ENCODE measurements at regions of chr7 and their contacts with region 1.

Region 1: DNA sequence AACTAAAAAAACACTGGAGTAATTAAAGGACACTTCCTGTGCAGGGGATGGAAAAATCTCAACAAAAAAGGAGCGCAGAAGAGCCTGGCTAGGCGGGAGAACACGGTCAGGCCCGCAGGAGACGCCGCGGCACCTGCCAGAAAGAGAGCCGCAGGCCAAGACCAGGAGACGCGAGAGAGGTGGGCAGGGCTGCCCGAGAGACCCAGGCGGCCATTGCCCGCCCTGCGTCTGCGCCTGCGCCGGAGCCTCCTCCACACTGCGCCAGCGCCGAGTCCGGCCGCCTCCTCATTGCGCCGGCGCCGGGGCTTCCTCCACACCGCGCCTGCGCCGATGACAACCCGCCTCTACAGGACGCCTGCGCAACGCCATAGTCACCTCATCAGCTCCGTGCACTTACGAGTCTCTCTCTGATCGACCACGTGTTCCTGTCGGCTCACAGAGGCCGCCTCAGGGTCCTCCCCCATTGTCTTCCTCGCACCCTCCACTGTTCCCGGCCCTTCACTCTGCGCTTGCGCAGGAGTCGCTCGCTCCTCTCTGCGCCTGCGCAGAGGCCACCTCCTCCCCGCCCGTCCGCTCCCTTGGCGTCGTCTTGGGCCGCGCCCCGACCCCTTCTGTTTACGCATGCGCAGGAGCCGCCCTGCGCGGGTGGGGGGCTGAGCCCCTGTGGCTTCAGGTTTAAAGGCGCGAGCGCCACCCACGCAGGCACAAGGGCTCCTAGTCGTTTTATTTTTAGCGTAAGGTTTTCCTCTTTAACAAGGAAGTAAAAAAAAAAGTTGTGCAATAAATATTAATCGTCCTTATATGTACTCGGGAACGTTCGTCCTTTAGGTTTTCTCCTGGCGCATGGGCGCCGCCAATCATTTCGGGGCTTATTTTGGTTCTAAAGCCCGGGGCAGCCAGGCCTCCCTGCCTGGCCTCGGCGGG is 43.2 kb upstream of the FAM20C start:
- DNase-seq: peak; percentile 98
- ATAC-seq: peak; percentile 99
- H3K4me3 Mint-ChIP-seq: peak overlapping the region; percentile 87
- H3K27ac Mint-ChIP-seq: peak overlapping the region; percentile 97
- H3K4me1 Mint-ChIP-seq: peaks cover 13% of the 10 kb centered on the region
- H3K27me3 Mint-ChIP-seq: no peaks in the 10 kb centered on the region

Region 2: DNA sequence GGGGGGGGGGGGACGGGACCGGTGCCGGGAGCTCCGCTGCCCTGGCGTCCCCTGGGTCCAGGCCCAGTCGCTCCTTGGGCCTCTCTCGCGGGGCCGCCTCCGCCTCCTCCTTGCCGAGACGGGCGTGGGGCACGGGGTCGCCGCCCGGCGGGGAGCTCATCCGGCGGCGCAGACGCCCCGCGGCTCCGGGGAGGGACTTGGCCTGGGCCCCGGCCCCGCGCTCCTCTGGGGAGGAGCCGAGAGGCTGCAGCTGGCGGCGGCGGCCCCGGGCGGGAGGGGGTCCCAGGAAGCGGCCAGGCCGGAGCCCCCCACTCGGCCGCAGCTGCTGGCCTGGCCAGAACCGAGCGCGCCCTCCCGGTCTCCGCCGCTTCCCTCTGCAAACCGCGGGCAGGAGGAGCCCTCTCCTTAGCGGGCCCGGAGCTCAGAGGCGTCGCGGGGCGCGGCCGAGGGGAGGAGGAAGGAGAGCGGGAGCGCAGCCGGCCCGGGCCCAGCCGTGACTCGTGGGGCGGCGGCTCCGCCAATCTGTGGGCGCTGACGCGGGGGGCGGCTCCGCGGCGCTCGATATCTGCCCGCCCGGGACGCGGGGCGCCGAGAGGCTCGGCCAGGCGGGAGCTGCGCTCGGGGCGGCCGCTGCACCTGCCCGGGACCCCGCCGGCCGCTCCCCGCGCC is 42.9 kb after region 1 on chr7 and contains the start of gene FAM20C:
- CTCF ChIA-PET with region 1: no interaction called
- POLR2A ChIA-PET with region 1: no interaction called
- intact Hi-C with region 1: loop called in 1 of 2 experiments (anchors 1 kb)
- DNase-seq: peak; percentile 59
- ATAC-seq: peak; percentile 84
- H3K4me3 Mint-ChIP-seq: peak within 1 kb of the TSS; percentile 59
- H3K27ac Mint-ChIP-seq: no peak within 1 kb of the TSS
- H3K4me1 Mint-ChIP-seq: peaks cover 3% of the 10 kb centered on the region
- H3K27me3 Mint-ChIP-seq: peaks cover 36% of the 10 kb centered on the region
- total RNA-seq, gene FAM20C: 0.21 to 0.59 TPM

Region 3: DNA sequence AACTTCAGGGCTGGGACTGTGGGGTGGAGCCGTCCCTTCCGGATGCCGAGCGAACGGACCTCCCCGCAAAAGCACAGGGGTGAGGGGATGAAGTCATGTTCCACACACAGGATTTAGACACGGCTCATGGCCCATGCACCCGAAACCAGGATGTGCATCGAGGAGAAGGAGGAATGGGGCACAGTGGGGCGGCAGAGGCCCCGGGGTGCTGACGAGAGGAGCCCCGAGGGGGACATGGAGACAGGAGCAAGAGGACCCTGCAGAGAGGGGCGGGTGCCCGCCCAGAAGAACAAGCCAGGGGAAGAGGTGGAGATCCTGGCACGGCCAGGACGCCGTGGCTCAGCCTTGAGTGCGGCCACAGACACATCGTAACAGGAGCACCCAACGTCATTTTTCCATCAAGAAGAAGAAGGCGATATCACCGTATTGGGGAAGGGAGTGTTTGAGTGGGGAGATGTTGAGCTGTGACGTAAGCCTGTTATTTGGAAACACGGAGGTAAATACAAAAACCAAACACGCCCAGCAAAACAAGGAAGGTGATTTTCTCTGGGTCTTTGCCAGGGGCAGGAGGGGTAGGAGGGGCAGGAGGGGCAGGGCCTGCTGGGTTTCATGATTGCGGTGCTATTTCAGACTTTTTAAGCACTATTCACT is 115.5 kb after region 1 on chr7:
- CTCF ChIA-PET with region 1: no interaction called
- POLR2A ChIA-PET with region 1: no interaction called
- intact Hi-C with region 1: loop called in 1 of 2 experiments (anchors 2 kb)
- DNase-seq: no peak
- ATAC-seq: no peak
- H3K4me3 Mint-ChIP-seq: no peak overlapping the region
- H3K27ac Mint-ChIP-seq: no peak overlapping the region
- H3K4me1 Mint-ChIP-seq: no peaks in the 10 kb centered on the region
- H3K27me3 Mint-ChIP-seq: no peaks in the 10 kb centered on the region

Region 4: GRCh38 chr7:322111-322671 is 173.0 kb after region 1 on chr7:
- CTCF ChIA-PET with region 1: no interaction called
- POLR2A ChIA-PET with region 1: no interaction called
- intact Hi-C with region 1: loop called in 1 of 2 experiments (anchors 1 kb)
- DNase-seq: peak; percentile 90
- ATAC-seq: peak; percentile 99
- H3K4me3 Mint-ChIP-seq: no peak overlapping the region
- H3K27ac Mint-ChIP-seq: no peak overlapping the region
- H3K4me1 Mint-ChIP-seq: no peaks in the 10 kb centered on the region
- H3K27me3 Mint-ChIP-seq: peaks cover 14% of the 10 kb centered on the region

Region 5: GRCh38 chr7:518630-519483 is 369.7 kb after region 1 on chr7:
- CTCF ChIA-PET with region 1: no interaction called
- POLR2A ChIA-PET with region 1: no interaction called
- intact Hi-C with region 1: loop called in 1 of 2 experiments (anchors 2 kb)
- DNase-seq: peak; percentile 75
- ATAC-seq: peak; percentile 42
- H3K4me3 Mint-ChIP-seq: peak overlapping the region; percentile 73
- H3K27ac Mint-ChIP-seq: no peak overlapping the region
- H3K4me1 Mint-ChIP-seq: peaks cover 16% of the 10 kb centered on the region
- H3K27me3 Mint-ChIP-seq: peaks cover 37% of the 10 kb centered on the region

Region 6: GRCh38 chr7:726084-726853 is 577.1 kb after region 1 on chr7 and contains the start of gene DNAAF5:
- CTCF ChIA-PET with region 1: no interaction called
- POLR2A ChIA-PET with region 1: no interaction called
- intact Hi-C with region 1: loop called in 1 of 2 experiments (anchors 1 kb)
- DNase-seq: peak; percentile 93
- ATAC-seq: peak; percentile 89
- H3K4me3 Mint-ChIP-seq: peak within 1 kb of the TSS; percentile 83
- H3K27ac Mint-ChIP-seq: peak within 1 kb of the TSS; percentile 90
- H3K4me1 Mint-ChIP-seq: peaks cover 26% of the 10 kb centered on the region
- H3K27me3 Mint-ChIP-seq: no peaks in the 10 kb centered on the region
- total RNA-seq, gene DNAAF5: 31.5 to 37.2 TPM

Measured in activated CD4-positive, alpha-beta T cell treated with anti-CD3 and anti-CD28 coated beads for 36 hours (primary cell).